Left cardiac atrium (tissue), 4 donors: ENCODE measurements at regions of chr7 and their contacts with region 1.

Region 1: GRCh38 chr7:28921822-28922221 is 36.3 kb downstream of the TRIL start:
- DNase-seq: no peak
- ATAC-seq: peak; percentile 94

Region 2: DNA sequence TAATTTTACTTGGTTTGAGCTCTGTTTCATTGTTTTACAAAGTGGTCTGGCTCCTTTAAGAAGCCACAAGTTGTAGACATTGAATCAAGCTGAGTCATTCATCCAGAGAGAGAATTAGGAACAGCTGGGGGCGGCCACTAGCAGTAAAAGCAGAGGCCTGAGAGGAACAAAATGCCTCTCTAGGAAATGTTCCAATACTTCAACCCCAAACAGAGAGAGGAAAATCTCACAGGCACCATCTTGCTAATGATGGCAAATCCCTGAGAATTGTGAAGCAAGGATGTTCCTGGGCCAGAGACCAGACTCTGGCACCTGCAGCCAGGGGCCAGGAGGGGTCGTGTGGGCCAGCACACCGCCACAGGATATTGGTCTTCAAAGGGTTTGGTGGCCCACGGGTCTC is 62.8 kb after region 1 on chr7:
- intact Hi-C with region 1: no loop called
- DNase-seq: peak; percentile 58
- ATAC-seq: peak; percentile 20 to 62

Region 3: GRCh38 chr7:29105752-29106668 is 184.2 kb after region 1 on chr7:
- intact Hi-C with region 1: loop called (anchors 1 to 2 kb)
- DNase-seq: no peak
- ATAC-seq: peak; percentile 66 to 72